ENCODE measurements at regions of chr20 and their contacts with region 1.

Region 1: GRCh38 chr20:7392542-7393206 is 547.6 kb downstream of the HAO1 start:
- DNase-seq: no peak
- H3K4me3 ChIP-seq: no peak overlapping the region
- H3K27ac ChIP-seq: no peak overlapping the region
- H3K4me1 ChIP-seq: no peaks in the 10 kb centered on the region
- H3K27me3 ChIP-seq: no peaks in the 10 kb centered on the region
- CTCF ChIP-seq: no peak
- EP300 ChIP-seq: no peak
- POLR2A ChIP-seq: no peak

Region 2: GRCh38 chr20:6074145-6074561 is 1318.5 kb before region 1 on chr20:
- intact Hi-C with region 1: no loop called
- DNase-seq: no peak
- H3K4me3 ChIP-seq: no peak overlapping the region
- H3K27ac ChIP-seq: no peak overlapping the region
- H3K4me1 ChIP-seq: no peaks in the 10 kb centered on the region
- H3K27me3 ChIP-seq: no peaks in the 10 kb centered on the region
- CTCF ChIP-seq: no peak
- EP300 ChIP-seq: no peak
- POLR2A ChIP-seq: no peak

Region 3: GRCh38 chr20:9375221-9375681 is 1982.6 kb after region 1 on chr20:
- intact Hi-C with region 1: loop called in 1 of 4 experiments (anchors 5 kb)
- DNase-seq: no peak
- H3K4me3 ChIP-seq: no peak overlapping the region
- H3K27ac ChIP-seq: no peak overlapping the region
- H3K4me1 ChIP-seq: no peaks in the 10 kb centered on the region
- H3K27me3 ChIP-seq: no peaks in the 10 kb centered on the region
- CTCF ChIP-seq: no peak
- EP300 ChIP-seq: no peak
- POLR2A ChIP-seq: no peak